Panc1 (cell line): ENCODE measurements at regions of chr5 and their contacts with region 1.

Region 1: DNA sequence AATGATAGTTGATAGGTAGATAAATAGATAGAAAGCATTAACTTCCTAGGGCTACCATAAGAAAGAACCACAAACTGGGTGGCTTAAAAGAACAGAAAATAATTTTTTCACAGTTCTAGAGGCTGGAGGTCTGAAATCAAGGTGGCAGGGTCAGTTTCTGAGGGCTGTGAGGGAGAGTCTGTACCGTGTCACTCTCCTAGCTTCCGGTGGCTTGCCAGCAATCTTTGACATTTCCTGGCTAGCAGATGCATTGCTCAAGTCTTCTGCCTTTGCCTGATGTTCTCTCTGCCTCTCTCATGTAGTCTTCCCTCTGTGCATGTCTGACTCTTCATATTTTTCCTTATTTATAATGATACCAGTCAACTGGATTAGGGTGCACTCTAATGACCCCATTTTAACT is 1132.7 kb downstream of the CDH9 start:
- DNase-seq: no peak
- ATAC-seq: no peak
- H3K4me3 ChIP-seq: no peak overlapping the region
- H3K27ac ChIP-seq: no peak overlapping the region
- H3K4me1 ChIP-seq: no peaks in the 10 kb centered on the region
- H3K27me3 ChIP-seq: no peaks in the 10 kb centered on the region
- CTCF ChIP-seq: no peak

Region 2: DNA sequence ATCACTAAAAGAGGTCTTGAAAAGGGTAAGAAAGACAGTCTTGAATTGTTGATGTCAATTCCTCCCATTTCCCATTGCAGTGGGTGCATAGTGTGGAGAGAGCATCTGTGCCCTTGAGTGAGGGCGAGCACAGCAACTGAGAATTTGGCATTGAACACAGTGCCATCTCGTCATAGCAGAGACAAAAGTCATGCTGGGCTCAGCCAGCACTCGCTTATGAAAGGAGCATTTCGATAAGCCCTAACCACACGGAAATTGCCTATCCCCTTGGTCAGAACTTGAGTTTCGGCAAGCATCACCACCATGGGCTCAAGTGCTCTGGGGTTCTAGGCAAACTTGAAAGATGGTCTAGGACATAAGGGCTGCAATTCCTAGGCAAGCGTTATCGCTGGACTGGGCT is 548.0 kb before region 1 on chr5:
- CTCF ChIA-PET with region 1: no interaction called
- POLR2A ChIA-PET with region 1: no interaction called
- in situ Hi-C with region 1: no loop called
- intact Hi-C with region 1: no loop called
- DNase-seq: no peak
- ATAC-seq: no peak
- H3K4me3 ChIP-seq: no peak overlapping the region
- H3K27ac ChIP-seq: no peak overlapping the region
- H3K4me1 ChIP-seq: no peaks in the 10 kb centered on the region
- H3K27me3 ChIP-seq: no peaks in the 10 kb centered on the region
- CTCF ChIP-seq: no peak

Region 3: GRCh38 chr5:25892211-25892610 is 13.4 kb before region 1 on chr5:
- CTCF ChIA-PET with region 1: no interaction called
- POLR2A ChIA-PET with region 1: no interaction called
- in situ Hi-C with region 1: no loop called
- intact Hi-C with region 1: loop called (anchors 2 kb)
- DNase-seq: no peak
- ATAC-seq: no peak
- H3K4me3 ChIP-seq: no peak overlapping the region
- H3K27ac ChIP-seq: no peak overlapping the region
- H3K4me1 ChIP-seq: no peaks in the 10 kb centered on the region
- H3K27me3 ChIP-seq: no peaks in the 10 kb centered on the region
- CTCF ChIP-seq: no peak

Region 4: GRCh38 chr5:26121338-26121737 is 215.7 kb after region 1 on chr5:
- CTCF ChIA-PET with region 1: no interaction called
- POLR2A ChIA-PET with region 1: no interaction called
- in situ Hi-C with region 1: no loop called
- intact Hi-C with region 1: no loop called
- DNase-seq: no peak
- ATAC-seq: no peak
- H3K4me3 ChIP-seq: no peak overlapping the region
- H3K27ac ChIP-seq: peak overlapping the region; percentile 54; the same call in 1 of the 2 replicates
- H3K4me1 ChIP-seq: no peaks in the 10 kb centered on the region
- H3K27me3 ChIP-seq: no peaks in the 10 kb centered on the region
- CTCF ChIP-seq: no peak

Region 5: GRCh38 chr5:26148614-26149013 is 243.0 kb after region 1 on chr5:
- CTCF ChIA-PET with region 1: no interaction called
- POLR2A ChIA-PET with region 1: no interaction called
- in situ Hi-C with region 1: no loop called
- intact Hi-C with region 1: no loop called
- DNase-seq: no peak
- ATAC-seq: no peak
- H3K4me3 ChIP-seq: no peak overlapping the region
- H3K27ac ChIP-seq: no peak overlapping the region
- H3K4me1 ChIP-seq: no peaks in the 10 kb centered on the region
- H3K27me3 ChIP-seq: no peaks in the 10 kb centered on the region
- CTCF ChIP-seq: no peak